ENCODE measurements at regions of chr6 and their contacts with region 1.

Region 1: GRCh38 chr6:47047479-47048407 is 5.6 kb upstream of the ADGRF1 start:
- DNase-seq: peak; percentile 20
- ATAC-seq: peak; percentile 82 to 88

Region 2: DNA sequence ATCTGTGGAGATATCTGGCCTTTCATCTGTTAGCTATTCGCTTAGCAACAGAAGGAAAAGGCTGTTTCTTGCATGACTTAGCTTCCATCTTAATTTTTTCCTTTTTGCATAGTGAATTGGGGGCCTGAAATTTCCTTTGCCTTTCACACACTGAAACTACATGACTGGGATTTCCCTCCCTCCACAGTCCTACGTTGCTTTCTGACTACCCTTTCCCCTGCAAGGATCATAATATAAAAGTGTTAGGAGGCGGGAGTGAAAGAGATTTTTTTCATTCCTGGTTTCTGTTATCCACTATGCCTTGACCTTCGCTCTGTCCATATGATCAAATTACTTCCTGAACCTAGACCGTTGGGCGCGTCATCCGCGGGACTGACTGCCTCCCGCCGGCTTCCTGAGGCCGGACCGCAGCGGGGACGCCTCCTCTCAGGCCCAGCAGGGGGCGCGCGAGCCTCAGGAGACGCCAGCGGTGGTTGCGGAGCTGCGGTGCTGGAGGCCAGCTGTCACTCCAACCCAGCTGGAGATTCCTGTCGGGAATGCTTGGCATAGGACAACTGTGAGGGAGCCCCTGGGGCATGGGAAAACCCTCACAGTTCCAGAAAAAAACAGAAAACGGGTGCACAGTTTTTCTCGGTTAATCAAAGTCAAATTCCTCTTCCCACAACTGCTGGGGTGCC is 198.9 kb before region 1 on chr6:
- intact Hi-C with region 1: loop called in 1 of 2 experiments (anchors 2 kb)
- DNase-seq: peak; percentile 90
- ATAC-seq: peak; percentile 97 to 98

Region 3: GRCh38 chr6:47009566-47009965 is 38.2 kb before region 1 on chr6:
- intact Hi-C with region 1: loop called in 1 of 2 experiments (anchors 5 kb)
- DNase-seq: no peak
- ATAC-seq: no peak